Dendritic cell treated with granulocyte-macrophage colony-stimulating factor and Interleukin-4, amounts not matched to agents 40 ng/mL and 50 ng/mL, for 4 days (primary cell): ENCODE measurements at regions of chr19 and their contacts with region 1.

Region 1: DNA sequence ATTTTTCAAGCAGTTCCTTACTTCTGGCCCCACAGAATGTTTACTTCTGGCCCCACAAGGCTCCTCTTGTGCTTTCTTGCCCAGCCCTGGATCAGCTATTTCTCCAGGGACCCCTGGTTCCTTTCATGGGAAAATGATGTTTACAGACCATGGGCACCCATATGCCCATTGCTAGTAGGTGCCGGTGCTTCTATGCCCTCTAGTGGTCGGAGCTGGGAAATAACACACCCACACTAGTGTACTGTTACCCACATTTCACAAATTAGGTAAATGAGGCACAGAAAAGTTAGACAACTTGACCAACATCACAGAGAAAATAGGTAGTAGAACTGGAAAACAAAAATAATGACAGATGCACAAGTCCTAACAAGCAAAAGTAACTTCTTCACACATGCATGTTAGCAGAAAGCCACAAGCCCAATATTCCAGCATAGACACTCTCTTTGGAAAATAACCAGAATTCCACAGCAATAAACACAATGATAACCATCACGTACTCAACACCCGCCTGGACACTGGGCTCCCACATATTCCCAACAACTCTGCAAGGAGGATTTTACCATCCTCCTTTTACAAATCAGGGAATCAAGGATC is 1.3 kb upstream of the CEACAM6 start:
- H3K4me3 Mint-ChIP-seq: no peak overlapping the region
- H3K27ac Mint-ChIP-seq: no peak overlapping the region
- H3K4me1 Mint-ChIP-seq: peaks cover 16% of the 10 kb centered on the region
- H3K27me3 Mint-ChIP-seq: peaks cover 7% of the 10 kb centered on the region

Region 2: GRCh38 chr19:41734617-41735016 is 19.4 kb before region 1 on chr19:
- intact Hi-C with region 1: no loop called
- H3K4me3 Mint-ChIP-seq: no peak overlapping the region
- H3K27ac Mint-ChIP-seq: no peak overlapping the region
- H3K4me1 Mint-ChIP-seq: no peaks in the 10 kb centered on the region
- H3K27me3 Mint-ChIP-seq: peaks cover 6% of the 10 kb centered on the region

Region 3: GRCh38 chr19:41785653-41786052 is 31.6 kb after region 1 on chr19:
- intact Hi-C with region 1: loop called (anchors 2 kb)
- H3K4me3 Mint-ChIP-seq: peak overlapping the region; percentile 17
- H3K27ac Mint-ChIP-seq: no peak overlapping the region
- H3K4me1 Mint-ChIP-seq: peaks cover 38% of the 10 kb centered on the region
- H3K27me3 Mint-ChIP-seq: peaks cover 15% of the 10 kb centered on the region

Region 4: DNA sequence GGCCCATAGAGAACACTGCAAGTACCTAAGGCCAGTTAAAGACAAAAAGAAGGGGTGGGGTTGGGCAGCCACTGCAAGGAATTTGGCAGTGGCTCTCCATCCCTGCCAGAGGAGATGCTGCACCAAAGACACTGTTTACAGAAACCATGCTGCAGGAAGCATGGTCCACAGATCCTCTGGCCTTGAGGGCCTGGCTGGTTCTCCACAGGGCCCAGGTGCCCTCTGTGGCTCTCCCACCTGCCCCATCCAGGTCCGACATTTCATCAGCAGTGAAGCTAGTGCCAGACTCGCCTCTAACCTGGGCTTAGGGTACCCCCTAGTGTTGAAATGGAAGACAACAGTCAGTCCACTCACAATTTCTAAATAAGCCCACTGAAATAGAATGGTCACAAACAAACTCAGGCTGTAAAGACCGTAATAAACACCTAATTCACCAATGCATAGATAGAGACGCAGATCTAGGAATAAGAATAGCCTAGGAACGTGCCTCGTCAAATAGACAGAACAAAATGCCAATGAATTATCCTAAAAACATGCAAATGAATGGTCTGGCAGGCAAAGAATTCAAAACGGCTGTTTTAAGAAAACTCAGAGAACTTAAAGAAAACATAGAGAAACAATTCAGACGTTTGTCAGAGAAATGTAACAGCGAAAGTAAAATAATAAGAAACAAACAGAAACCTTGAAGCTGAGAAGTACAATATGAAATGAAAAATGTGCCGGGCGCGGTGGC is 67.1 kb after region 1 on chr19:
- intact Hi-C with region 1: loop called (anchors 1 kb)
- H3K4me3 Mint-ChIP-seq: no peak overlapping the region
- H3K27ac Mint-ChIP-seq: no peak overlapping the region
- H3K4me1 Mint-ChIP-seq: no peaks in the 10 kb centered on the region
- H3K27me3 Mint-ChIP-seq: peaks cover 16% of the 10 kb centered on the region